Activated CD4-positive, alpha-beta T cell treated with anti-CD3 and anti-CD28 coated beads, Interleukin-2, amount 10 ng/mL, durations not matched to agents 7 days and 5 days (primary cell): ENCODE measurements at regions of chr5 and their contacts with region 1.

Region 1: GRCh38 chr5:151164686-151165392 is 7.3 kb upstream of the ANXA6 start:
- DNase-seq: peak; percentile 87
- H3K4me3 Mint-ChIP-seq: no peak overlapping the region
- H3K27ac Mint-ChIP-seq: peak overlapping the region; percentile 58
- H3K4me1 Mint-ChIP-seq: peaks cover 11% of the 10 kb centered on the region
- H3K27me3 Mint-ChIP-seq: no peaks in the 10 kb centered on the region

Region 2: GRCh38 chr5:151051066-151051930 is 113.5 kb before region 1 on chr5:
- CTCF ChIA-PET with region 1: interaction called, 28 read pairs
- POLR2A ChIA-PET with region 1: interaction called, 3 read pairs
- DNase-seq: peak; percentile 72
- H3K4me3 Mint-ChIP-seq: no peak overlapping the region
- H3K27ac Mint-ChIP-seq: peak overlapping the region; percentile 43
- H3K4me1 Mint-ChIP-seq: peaks cover 4% of the 10 kb centered on the region
- H3K27me3 Mint-ChIP-seq: no peaks in the 10 kb centered on the region

Region 3: GRCh38 chr5:151126199-151126645 is 38.6 kb before region 1 on chr5:
- CTCF ChIA-PET with region 1: interaction called, 126 read pairs
- POLR2A ChIA-PET with region 1: interaction called, 3 read pairs
- DNase-seq: peak; percentile 70
- H3K4me3 Mint-ChIP-seq: no peak overlapping the region
- H3K27ac Mint-ChIP-seq: peak overlapping the region; percentile 79
- H3K4me1 Mint-ChIP-seq: peaks cover 42% of the 10 kb centered on the region
- H3K27me3 Mint-ChIP-seq: no peaks in the 10 kb centered on the region

Region 4: DNA sequence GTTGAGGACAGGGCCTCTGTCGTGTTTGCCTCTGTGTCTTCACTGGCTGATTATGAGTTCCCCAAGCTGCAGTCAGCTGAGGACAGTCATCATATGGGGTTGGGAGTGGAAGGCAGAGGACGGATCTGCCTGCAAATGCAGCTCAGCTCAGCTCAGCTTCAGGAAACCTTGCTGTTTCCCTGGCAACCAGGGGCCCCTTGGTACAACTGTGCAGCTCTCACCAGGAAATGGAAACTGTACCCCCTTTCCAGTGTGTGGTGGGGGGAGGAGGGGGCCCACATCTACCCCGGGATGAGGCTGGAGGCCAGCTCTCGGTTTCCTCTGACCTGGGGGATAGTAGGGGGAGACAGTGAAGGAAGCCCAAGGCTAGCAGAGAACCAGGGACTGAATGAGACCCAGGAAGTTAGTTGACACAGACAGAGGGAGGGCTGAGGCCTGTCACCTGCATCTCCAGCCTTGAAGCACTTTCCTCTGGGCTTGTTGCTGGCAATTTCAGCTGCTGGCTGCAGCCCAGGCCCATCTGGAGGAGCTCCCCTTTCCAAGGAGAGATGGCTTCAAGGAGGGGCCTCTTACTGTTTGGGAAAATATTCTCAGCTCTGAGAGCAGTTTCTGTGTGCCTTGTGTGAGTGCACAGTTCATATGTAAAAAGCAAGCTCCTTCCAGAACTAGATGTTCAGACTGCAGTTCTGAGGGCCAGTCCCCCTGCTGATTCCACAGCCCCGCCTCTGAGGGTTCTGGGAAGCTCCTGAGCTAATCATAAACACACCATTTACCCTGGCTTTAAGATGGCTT is 14.2 kb before region 1 on chr5:
- CTCF ChIA-PET with region 1: interaction called, 89 read pairs
- POLR2A ChIA-PET with region 1: interaction called, 3 read pairs
- DNase-seq: peak; percentile 88
- H3K4me3 Mint-ChIP-seq: peak overlapping the region; percentile 53
- H3K27ac Mint-ChIP-seq: peak overlapping the region; percentile 93
- H3K4me1 Mint-ChIP-seq: peaks cover 89% of the 10 kb centered on the region
- H3K27me3 Mint-ChIP-seq: no peaks in the 10 kb centered on the region

Region 5: DNA sequence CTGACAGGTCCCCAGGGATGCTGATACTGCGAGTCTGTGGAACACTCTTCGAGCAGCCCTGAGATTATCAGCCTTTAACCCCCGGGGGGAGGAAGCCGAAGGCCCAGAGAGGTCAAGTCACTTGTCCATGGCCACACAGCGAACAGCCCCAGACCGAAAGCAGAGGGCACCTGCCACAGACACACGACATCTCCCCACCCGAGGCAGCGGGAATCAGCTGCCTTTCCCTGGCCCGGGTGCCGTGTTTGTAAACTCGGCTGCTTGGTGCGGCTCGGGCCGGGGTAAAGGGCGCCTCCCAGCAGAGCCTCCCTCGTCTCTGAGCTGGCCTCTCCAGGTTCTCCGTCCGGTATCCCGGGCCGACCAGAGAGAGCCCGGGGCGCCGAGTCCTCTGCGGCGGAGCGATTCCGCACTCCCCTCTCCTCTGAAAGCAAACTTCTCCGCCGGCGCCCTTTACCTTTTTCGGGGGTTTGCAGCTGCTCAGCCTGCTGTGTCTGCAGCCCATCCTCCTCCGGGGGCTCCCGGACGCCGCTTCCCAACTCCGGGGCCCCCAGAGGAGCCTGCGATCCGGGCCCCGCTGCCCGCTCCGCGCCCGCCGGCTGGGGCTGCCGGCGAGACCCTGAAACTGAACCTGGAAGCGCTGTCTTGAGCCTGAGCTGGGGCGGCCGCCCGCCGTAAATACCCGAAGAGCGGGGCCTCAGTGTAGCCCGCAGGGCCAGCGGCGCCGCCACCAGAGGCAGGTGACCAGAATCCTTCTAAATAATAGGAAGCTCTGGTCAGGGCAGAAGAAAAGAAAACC is 58.8 kb after region 1 on chr5 and contains the start of gene CCDC69:
- CTCF ChIA-PET with region 1: interaction called, 12 read pairs
- POLR2A ChIA-PET with region 1: no interaction called
- DNase-seq: peak; percentile 58
- H3K4me3 Mint-ChIP-seq: peak within 1 kb of the TSS; percentile 82
- H3K27ac Mint-ChIP-seq: peak within 1 kb of the TSS; percentile 88
- H3K4me1 Mint-ChIP-seq: peaks cover 52% of the 10 kb centered on the region
- H3K27me3 Mint-ChIP-seq: no peaks in the 10 kb centered on the region
- total RNA-seq, gene CCDC69: 79.4 to 84.1 TPM

Region 6: DNA sequence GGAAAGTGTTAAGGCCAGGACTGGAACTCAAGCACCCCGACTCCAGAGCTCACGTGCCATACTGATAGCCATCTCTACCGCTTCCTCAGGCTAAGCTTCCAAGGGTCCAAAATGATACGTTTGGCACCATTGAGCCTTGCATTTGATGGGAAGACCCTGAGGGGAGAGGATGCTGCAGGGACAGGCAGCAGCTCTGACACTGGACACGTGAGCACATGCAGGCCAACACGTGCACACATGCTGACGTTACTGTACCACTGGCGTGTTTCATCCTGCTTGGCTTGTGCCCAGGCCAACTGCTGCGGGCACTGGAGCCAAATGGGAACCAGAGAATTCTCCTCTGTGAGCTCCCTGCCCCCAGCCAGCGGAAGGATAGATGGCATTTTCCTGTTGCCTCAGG is 421.1 kb after region 1 on chr5:
- CTCF ChIA-PET with region 1: no interaction called
- POLR2A ChIA-PET with region 1: no interaction called
- DNase-seq: no peak
- H3K4me3 Mint-ChIP-seq: no peak overlapping the region
- H3K27ac Mint-ChIP-seq: no peak overlapping the region
- H3K4me1 Mint-ChIP-seq: no peaks in the 10 kb centered on the region
- H3K27me3 Mint-ChIP-seq: no peaks in the 10 kb centered on the region